ENCODE measurements at regions of chr3 and their contacts with region 1.

Region 1: DNA sequence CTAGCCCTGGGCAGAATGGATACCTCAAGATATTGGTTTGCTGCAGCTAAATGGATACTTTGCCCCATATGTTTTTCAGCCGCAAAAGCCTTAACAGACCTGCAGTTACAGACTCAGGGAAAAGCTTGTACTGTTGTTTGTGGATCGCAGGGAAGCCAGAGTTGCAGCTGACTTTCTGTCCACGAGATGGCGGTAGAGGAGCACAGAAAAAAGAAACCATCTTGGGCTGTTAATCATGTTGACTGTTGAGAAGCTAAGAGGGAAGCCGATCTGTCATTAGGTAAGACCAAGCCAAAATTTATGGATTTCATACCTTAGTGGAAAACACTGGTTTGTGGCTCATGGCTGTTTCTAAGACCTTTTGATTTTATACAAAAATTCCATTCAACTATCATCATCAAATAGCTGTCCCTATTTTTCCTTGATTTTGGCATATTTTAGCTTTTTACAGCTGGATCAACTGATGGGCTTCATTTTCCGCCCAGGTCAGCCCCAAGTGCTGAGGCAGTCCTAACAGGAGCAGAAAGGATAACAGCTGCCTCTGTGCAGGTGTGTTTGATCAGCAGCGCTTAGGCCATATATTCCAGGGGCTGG is 205.7 kb upstream of the ZPLD1 start:
- DNase-seq: peak; percentile 94
- ATAC-seq: peak; percentile 31
- H3K4me3 ChIP-seq: no peak overlapping the region
- H3K27ac ChIP-seq: no peak overlapping the region
- H3K4me1 ChIP-seq: peaks cover 39% of the 10 kb centered on the region
- H3K27me3 ChIP-seq: no peaks in the 10 kb centered on the region
- CTCF ChIP-seq: peak; percentile 96

Region 2: GRCh38 chr3:101803173-101803782 is 425.9 kb before region 1 on chr3:
- CTCF ChIA-PET with region 1: interaction called, 14 read pairs
- POLR2A ChIA-PET with region 1: interaction called, 3 read pairs
- intact Hi-C with region 1: no loop called
- DNase-seq: peak; percentile 85
- ATAC-seq: peak; percentile 100
- H3K4me3 ChIP-seq: no peak overlapping the region
- H3K27ac ChIP-seq: no peak overlapping the region
- H3K4me1 ChIP-seq: no peaks in the 10 kb centered on the region; the same call in 1 of the 2 replicates
- H3K27me3 ChIP-seq: no peaks in the 10 kb centered on the region
- CTCF ChIP-seq: peak; percentile 92

Region 3: DNA sequence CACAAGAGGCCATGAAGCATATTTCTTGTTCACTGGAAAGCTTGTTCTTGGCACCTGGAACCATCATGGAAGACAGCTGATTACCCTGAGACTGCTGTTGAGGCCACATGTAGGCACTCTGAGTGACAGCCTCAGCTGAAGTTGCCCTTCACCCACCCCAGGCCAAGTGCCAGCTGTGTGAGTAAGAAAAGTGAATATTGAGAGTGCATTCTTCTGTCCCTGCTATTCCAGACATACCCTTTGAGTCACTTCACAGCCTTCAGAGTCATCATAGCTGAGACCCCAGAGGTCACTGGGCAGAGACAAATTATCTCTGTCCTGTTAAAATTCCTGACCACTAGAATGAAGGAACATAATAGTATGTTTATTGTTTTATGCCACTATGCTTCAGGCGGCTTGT is 300.3 kb before region 1 on chr3:
- CTCF ChIA-PET with region 1: interaction called, 8 read pairs
- POLR2A ChIA-PET with region 1: interaction called, 19 read pairs
- intact Hi-C with region 1: loop called (anchors 1 kb)
- DNase-seq: peak; percentile 95
- ATAC-seq: peak; percentile 41
- H3K4me3 ChIP-seq: no peak overlapping the region
- H3K27ac ChIP-seq: peak overlapping the region; percentile 91
- H3K4me1 ChIP-seq: peaks cover 38% of the 10 kb centered on the region
- H3K27me3 ChIP-seq: no peaks in the 10 kb centered on the region
- CTCF ChIP-seq: no peak

Region 4: DNA sequence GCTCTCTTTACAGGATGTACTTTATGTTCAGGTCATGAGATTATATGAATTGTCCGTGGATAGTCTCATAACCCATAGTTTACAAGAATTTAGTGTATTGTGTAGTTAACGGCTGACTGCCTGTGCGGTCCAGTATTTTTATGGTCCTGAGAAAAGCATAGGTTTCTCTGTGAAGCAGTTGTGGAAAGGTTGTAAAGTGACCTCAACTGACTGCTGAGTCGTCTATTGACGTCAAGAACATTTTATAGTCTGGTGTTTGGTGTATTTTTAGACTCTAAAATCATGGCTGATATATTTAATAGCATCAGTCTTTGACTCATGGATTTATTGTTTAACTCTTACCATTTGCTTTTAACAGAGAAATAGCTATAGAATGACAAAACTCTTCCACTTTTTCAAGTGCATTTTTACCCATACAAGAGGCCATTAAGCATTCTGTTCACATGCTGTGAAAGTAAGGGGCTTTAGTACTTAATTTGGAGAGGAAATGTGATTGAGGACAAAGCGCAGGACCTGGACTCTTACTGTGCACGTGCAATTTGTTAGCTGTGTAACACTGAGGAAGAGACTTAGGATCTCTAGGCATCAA is 139.2 kb before region 1 on chr3:
- CTCF ChIA-PET with region 1: no interaction called
- POLR2A ChIA-PET with region 1: no interaction called
- intact Hi-C with region 1: loop called (anchors 1 kb)
- DNase-seq: peak; percentile 89
- ATAC-seq: peak; percentile 89
- H3K4me3 ChIP-seq: no peak overlapping the region
- H3K27ac ChIP-seq: peak overlapping the region; percentile 97
- H3K4me1 ChIP-seq: peaks cover 30% of the 10 kb centered on the region
- H3K27me3 ChIP-seq: no peaks in the 10 kb centered on the region
- CTCF ChIP-seq: no peak

Region 5: GRCh38 chr3:102174312-102174712 is 54.8 kb before region 1 on chr3:
- CTCF ChIA-PET with region 1: interaction called, 21 read pairs
- POLR2A ChIA-PET with region 1: interaction called, 9 read pairs
- intact Hi-C with region 1: loop called (anchors 1 kb)
- DNase-seq: peak; percentile 91
- ATAC-seq: peak; percentile 82
- H3K4me3 ChIP-seq: 0 out of 2 replicates have a peak overlapping the region, but pooled peaks have one; percentile 7
- H3K27ac ChIP-seq: peak overlapping the region; percentile 97
- H3K4me1 ChIP-seq: peaks cover 42% of the 10 kb centered on the region
- H3K27me3 ChIP-seq: no peaks in the 10 kb centered on the region
- CTCF ChIP-seq: no peak

Region 6: DNA sequence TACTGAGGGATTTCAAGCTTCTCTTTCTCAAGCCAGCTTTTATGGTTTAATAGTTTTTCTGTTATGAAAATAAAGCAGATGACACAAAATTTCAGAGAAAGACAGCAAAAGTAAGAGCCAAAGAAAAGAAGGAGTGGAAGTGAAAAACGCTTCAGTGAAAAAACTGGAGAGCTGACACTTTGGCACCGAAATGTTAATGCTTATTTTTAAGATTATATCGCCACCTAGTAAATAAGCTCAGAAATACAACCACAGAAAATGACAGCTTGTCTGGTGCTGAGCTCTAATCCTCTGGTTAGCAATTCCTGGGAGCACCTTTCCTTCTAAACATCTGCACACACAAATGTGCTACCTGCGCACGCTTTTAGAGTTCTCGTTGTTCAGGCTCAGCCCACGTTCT is 307.3 kb after region 1 on chr3:
- CTCF ChIA-PET with region 1: interaction called, 111 read pairs
- POLR2A ChIA-PET with region 1: interaction called, 3 read pairs
- intact Hi-C with region 1: loop called (anchors 1 kb)
- DNase-seq: peak; percentile 84
- ATAC-seq: peak; percentile 82
- H3K4me3 ChIP-seq: no peak overlapping the region
- H3K27ac ChIP-seq: no peak overlapping the region
- H3K4me1 ChIP-seq: peaks cover 19% of the 10 kb centered on the region
- H3K27me3 ChIP-seq: no peaks in the 10 kb centered on the region
- CTCF ChIP-seq: peak; percentile 76

Region 7: GRCh38 chr3:102699819-102700140 is 470.6 kb after region 1 on chr3:
- CTCF ChIA-PET with region 1: no interaction called
- POLR2A ChIA-PET with region 1: no interaction called
- intact Hi-C with region 1: no loop called
- DNase-seq: no peak
- ATAC-seq: no peak
- H3K4me3 ChIP-seq: no peak overlapping the region
- H3K27ac ChIP-seq: no peak overlapping the region
- H3K4me1 ChIP-seq: no peaks in the 10 kb centered on the region
- H3K27me3 ChIP-seq: peaks cover 30% of the 10 kb centered on the region
- CTCF ChIP-seq: no peak

Measured in PC-3 (cell line).